ENCODE measurements at regions of chr7 and their contacts with region 1.

Region 1: GRCh38 chr7:39949980-39950472 is at the start of gene CDK13:
- H3K4me3 Mint-ChIP-seq: peak within 1 kb of the TSS; percentile 92
- H3K27ac Mint-ChIP-seq: peak within 1 kb of the TSS; percentile 98
- H3K4me1 Mint-ChIP-seq: peaks cover 14% of the 10 kb centered on the region
- H3K27me3 Mint-ChIP-seq: no peaks in the 10 kb centered on the region

Region 2: GRCh38 chr7:39894904-39895303 is 55.1 kb before region 1 on chr7:
- intact Hi-C with region 1: loop called (anchors 10 kb)
- H3K4me3 Mint-ChIP-seq: no peak overlapping the region
- H3K27ac Mint-ChIP-seq: no peak overlapping the region
- H3K4me1 Mint-ChIP-seq: peaks cover 6% of the 10 kb centered on the region
- H3K27me3 Mint-ChIP-seq: no peaks in the 10 kb centered on the region

Region 3: GRCh38 chr7:39987476-39988347 is 37.7 kb after region 1 on chr7:
- intact Hi-C with region 1: loop called (anchors 5 kb)
- H3K4me3 Mint-ChIP-seq: no peak overlapping the region
- H3K27ac Mint-ChIP-seq: no peak overlapping the region
- H3K4me1 Mint-ChIP-seq: peaks cover 42% of the 10 kb centered on the region
- H3K27me3 Mint-ChIP-seq: no peaks in the 10 kb centered on the region

Region 4: DNA sequence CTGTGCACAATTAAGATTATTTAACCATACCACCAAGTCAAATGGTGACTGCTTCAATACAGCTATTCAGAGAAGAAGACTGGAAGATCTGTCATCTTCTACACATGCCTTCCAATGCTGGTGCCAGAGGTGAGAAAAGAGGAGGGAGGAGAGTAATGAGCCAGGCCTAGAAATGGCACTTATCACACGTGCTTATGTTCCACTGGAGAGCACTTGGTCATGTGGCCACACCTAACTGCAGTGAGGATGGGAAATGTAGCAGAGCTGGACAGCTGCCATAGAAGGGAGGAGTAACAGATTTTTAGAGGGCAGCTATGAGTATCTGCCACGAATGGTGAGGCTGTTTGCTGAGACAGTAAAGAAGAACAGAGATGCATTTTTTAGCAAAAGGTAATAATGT is 107.3 kb after region 1 on chr7:
- intact Hi-C with region 1: loop called (anchors 5 kb)
- H3K4me3 Mint-ChIP-seq: no peak overlapping the region
- H3K27ac Mint-ChIP-seq: no peak overlapping the region
- H3K4me1 Mint-ChIP-seq: peaks cover 10% of the 10 kb centered on the region
- H3K27me3 Mint-ChIP-seq: no peaks in the 10 kb centered on the region

Region 5: DNA sequence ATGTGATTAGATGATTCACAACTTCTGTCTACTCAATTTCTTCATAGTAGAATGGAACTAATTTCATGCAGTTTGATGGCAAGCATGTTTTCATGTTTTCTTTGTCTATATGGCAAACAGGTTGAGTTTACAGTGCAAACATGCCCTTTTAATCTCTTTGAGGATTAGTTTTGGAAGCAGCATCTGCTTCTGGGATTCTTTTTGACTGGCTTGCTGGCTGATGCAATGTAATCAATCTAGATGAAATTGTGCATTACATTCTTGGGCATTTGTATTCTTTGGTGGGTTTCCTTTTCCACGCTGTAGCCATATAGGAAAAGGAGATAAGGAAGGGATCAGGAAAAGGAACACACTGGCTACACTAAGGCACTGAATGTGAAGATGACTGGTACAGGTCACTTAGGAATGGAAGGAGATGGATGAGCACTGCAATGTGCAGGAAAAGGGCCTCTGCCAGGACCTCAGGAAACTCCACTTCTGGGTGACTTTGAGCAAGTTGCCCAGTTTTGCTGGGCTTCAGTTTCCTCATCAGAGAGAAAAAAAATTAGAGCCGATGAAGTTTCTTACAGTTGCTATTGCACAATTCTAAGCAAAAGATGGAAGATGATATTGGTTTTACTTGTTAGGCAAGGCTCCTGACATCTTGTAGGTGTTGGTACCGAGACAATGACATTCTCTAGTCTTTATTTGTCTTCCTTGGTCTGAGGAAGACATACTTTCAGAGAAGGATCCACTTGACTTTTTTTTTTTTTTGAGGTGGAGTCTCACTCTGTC is 453.9 kb after region 1 on chr7:
- intact Hi-C with region 1: no loop called
- H3K4me3 Mint-ChIP-seq: no peak overlapping the region
- H3K27ac Mint-ChIP-seq: no peak overlapping the region
- H3K4me1 Mint-ChIP-seq: no peaks in the 10 kb centered on the region
- H3K27me3 Mint-ChIP-seq: no peaks in the 10 kb centered on the region

Measured in dendritic cell treated with granulocyte-macrophage colony-stimulating factor and Interleukin-4, amounts not matched to agents 40 ng/mL and 50 ng/mL, for 4 days (primary cell).